ENCODE measurements at regions of chr2 and their contacts with region 1.

Region 1: GRCh38 chr2:68441179-68441993 is 25.7 kb downstream of the FBXO48 start:
- DNase-seq: peak; percentile 92
- H3K4me3 Mint-ChIP-seq: no peak overlapping the region
- H3K27ac Mint-ChIP-seq: no peak overlapping the region
- H3K4me1 Mint-ChIP-seq: no peaks in the 10 kb centered on the region
- H3K27me3 Mint-ChIP-seq: no peaks in the 10 kb centered on the region
- CTCF ChIP-seq: peak; percentile 88

Region 2: GRCh38 chr2:68290901-68291300 is 150.5 kb before region 1 on chr2:
- CTCF ChIA-PET with region 1: interaction called, 30 read pairs
- POLR2A ChIA-PET with region 1: no interaction called
- intact Hi-C with region 1: loop called (anchors 1 kb)
- DNase-seq: no peak
- H3K4me3 Mint-ChIP-seq: no peak overlapping the region
- H3K27ac Mint-ChIP-seq: no peak overlapping the region
- H3K4me1 Mint-ChIP-seq: peaks cover 10% of the 10 kb centered on the region
- H3K27me3 Mint-ChIP-seq: no peaks in the 10 kb centered on the region
- CTCF ChIP-seq: no peak

Region 3: GRCh38 chr2:68362069-68362468 is 79.3 kb before region 1 on chr2:
- CTCF ChIA-PET with region 1: interaction called, 11 read pairs
- POLR2A ChIA-PET with region 1: interaction called, 4 read pairs
- intact Hi-C with region 1: loop called (anchors 1 kb)
- DNase-seq: peak; percentile 68
- H3K4me3 Mint-ChIP-seq: no peak overlapping the region
- H3K27ac Mint-ChIP-seq: no peak overlapping the region
- H3K4me1 Mint-ChIP-seq: no peaks in the 10 kb centered on the region
- H3K27me3 Mint-ChIP-seq: no peaks in the 10 kb centered on the region
- CTCF ChIP-seq: peak; percentile 73

Region 4: DNA sequence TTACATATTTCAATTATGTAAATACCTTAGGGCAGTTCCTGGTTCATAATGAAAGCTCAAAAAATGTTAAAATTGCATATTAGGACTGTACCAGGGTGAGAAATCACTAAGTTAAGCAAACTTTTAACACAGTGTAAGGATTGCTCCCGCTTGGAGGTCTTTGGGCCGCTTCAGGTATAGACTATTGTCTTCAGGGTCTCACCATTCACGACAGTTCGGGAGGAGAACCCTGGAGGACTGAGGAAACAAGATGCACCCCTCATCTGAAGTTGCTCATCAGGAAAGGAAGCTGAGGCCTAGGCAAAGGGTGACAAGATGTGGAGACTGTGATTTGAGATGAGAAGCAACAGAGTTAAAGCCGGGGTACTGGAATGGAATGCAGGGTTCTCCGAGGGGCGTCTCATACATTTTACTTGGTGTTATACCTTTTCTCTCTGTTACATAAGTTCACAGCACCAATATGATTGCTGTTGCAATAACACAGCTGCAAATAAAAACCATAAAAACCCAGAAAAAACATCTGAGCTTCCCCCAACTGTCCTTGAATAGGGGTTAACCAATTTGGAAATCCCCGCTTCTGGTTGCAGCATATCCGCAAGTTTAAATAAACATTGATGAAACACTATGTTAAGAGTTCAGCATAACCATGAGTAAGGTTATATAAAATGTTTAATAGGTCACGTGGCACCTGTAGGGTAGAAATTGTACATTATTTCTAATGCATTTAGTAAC is 14.4 kb before region 1 on chr2:
- CTCF ChIA-PET with region 1: interaction called, 24 read pairs
- POLR2A ChIA-PET with region 1: interaction called, 6 read pairs
- intact Hi-C with region 1: no loop called
- DNase-seq: peak; percentile 78
- H3K4me3 Mint-ChIP-seq: no peak overlapping the region
- H3K27ac Mint-ChIP-seq: no peak overlapping the region
- H3K4me1 Mint-ChIP-seq: no peaks in the 10 kb centered on the region
- H3K27me3 Mint-ChIP-seq: no peaks in the 10 kb centered on the region
- CTCF ChIP-seq: no peak

Region 5: DNA sequence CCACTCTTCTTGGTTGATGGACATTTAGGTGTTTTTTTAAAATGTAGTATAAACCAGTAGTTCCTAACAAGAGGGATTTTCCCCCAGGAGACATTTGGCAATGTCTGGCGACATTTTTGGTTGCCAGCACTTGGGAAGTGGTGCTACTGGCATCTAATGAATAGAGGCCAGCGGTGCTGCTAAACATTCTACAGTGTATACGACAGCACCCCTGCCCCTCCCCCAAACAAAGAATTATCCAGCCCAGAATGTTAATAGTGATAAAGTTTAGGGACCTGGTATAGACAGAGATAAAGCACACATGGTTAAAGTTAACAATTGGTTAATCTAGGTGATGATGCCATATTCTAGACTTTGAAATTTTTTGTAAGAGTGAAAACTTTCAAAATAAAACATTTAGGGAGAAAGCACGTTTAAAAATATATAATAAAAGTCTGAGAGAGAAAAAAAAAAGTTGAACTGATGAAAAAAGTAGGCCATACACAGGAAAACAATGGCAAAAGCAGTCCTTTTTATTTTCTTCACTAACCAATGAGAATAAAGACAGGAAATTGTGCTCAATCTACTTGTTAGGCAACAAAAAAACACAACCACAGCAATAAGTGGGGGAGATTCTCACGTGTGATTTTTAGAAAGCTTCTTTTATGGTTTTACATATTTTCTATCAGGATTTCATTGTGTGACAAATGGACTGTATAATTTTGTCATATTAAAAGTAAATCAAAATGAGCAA is 10.9 kb after region 1 on chr2:
- CTCF ChIA-PET with region 1: interaction called, 11 read pairs
- POLR2A ChIA-PET with region 1: interaction called, 8 read pairs
- intact Hi-C with region 1: no loop called
- DNase-seq: no peak
- H3K4me3 Mint-ChIP-seq: no peak overlapping the region
- H3K27ac Mint-ChIP-seq: no peak overlapping the region
- H3K4me1 Mint-ChIP-seq: no peaks in the 10 kb centered on the region
- H3K27me3 Mint-ChIP-seq: no peaks in the 10 kb centered on the region
- CTCF ChIP-seq: no peak

Measured in MCF 10A (cell line).